GM10248 (cell line): ENCODE measurements at regions of chr16 and their contacts with region 1.

Region 1: DNA sequence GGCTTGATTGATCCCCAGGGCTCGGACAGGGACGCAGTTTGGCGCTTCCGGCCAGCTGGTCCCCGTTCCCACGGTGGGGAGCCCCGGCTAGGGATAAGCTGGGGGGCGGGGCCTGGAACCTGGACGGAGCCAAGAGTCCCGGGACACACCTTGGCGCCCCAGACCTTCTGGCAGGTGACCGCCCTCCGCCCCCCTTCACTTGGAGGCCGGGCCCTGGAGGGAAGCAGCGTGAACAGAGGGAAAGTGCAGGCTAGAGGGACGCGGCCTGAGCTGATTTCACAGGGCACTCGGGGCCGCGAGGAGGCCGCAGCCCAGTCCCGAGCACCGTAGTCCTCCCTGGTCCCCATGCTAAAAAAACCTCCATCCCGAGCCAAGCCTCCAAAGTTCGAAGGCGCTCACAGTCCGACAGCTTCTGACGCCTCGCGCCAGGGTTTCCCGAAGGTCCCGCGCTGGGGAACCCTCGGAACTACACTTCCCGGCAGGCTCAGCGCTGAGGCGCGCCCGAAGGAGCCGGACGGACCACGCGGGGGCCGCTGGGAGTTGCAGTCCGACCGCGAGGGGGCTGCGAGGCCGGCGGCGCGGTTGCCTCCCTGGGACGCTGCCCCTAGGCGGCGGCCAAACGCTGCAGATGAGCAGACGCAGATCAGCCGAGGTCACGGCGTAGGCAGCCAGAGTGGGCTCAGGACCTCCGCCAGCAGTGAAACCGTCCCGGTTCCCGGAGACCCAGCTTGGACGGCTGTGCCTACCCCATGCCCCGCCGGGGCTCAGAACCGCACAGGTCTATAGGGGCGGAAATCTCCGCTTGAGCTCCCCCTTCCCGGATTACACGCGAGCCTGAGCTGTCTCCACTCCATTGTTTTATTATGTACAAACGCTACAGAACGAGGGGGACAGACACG is at the start of gene TBX6:
- DNase-seq: peak; percentile 93
- CTCF ChIP-seq: peak; percentile 90

Region 2: DNA sequence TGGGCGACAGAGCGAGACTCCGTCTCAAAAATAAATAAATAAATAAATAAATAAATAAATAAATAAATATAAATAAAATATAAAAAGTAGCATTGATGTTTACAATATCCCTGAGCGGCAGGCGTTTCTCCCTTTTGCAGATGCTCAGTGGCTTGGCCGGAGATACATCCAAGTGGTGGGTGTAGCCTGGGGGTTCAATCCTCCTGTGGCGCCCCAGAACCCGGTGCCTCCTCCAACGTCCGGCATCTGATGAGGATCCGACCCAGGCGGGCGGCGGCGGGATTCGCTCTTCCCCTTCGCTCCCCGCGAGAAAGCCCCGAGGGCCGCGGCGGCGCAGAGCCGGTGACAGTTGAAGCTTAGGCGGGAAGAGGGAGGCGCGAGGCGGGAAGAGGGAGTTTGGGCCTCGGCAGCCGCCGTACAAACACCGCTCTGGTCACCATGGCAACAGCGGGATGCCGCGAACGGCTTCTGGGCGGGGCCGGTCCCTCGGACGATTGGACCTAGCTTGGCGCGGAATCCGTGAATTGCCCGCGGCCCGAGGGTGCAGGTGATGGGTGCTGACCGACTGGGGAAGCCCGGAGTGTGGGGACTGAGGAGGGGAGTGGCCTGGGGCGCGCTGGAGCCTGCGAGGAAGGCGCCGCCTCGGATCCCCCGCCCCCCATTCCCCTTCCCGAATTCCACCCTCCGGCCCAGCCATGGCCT is 38.9 kb before region 1 on chr16:
- CTCF ChIA-PET with region 1: interaction called, 12 read pairs
- POLR2A ChIA-PET with region 1: no interaction called
- DNase-seq: peak; percentile 97
- CTCF ChIP-seq: no peak

Region 3: GRCh38 chr16:30075507-30076275 is 16.0 kb before region 1 on chr16 and contains the start of gene PPP4C:
- CTCF ChIA-PET with region 1: interaction called, 102 read pairs
- POLR2A ChIA-PET with region 1: interaction called, 8 read pairs
- DNase-seq: peak; percentile 94
- CTCF ChIP-seq: no peak

Region 4: GRCh38 chr16:30112197-30113030 is 20.7 kb after region 1 on chr16:
- CTCF ChIA-PET with region 1: interaction called, 29 read pairs
- POLR2A ChIA-PET with region 1: no interaction called
- DNase-seq: peak; percentile 86
- CTCF ChIP-seq: peak; percentile 80

Region 5: GRCh38 chr16:30186782-30187555 is 95.2 kb after region 1 on chr16:
- CTCF ChIA-PET with region 1: interaction called, 17 read pairs
- POLR2A ChIA-PET with region 1: interaction called, 10 read pairs
- DNase-seq: peak; percentile 53
- CTCF ChIP-seq: peak; percentile 87